Naive thymus-derived CD4-positive, alpha-beta T cell (primary cell): ENCODE measurements at regions of chr6 and their contacts with region 1.

Region 1: GRCh38 chr6:11381801-11382513 is 149.5 kb upstream of the NEDD9 start:
- DNase-seq: peak; percentile 43 to 88 (median 82)
- ATAC-seq: peak; percentile 95
- H3K4me3 ChIP-seq: peak overlapping the region; percentile 70
- H3K4me3 Mint-ChIP-seq: peak overlapping the region; percentile 76 to 96 (median 91)
- H3K27ac ChIP-seq: peak overlapping the region; percentile 79
- H3K27ac Mint-ChIP-seq: peak overlapping the region; percentile 79 to 94 (median 91)
- H3K4me1 ChIP-seq: peaks cover 23 to 28% of the 10 kb centered on the region in 2 donors
- H3K4me1 Mint-ChIP-seq: peaks cover 42 to 85% (median 66%) of the 10 kb centered on the region in 7 donors
- H3K27me3 ChIP-seq: no peaks in the 10 kb centered on the region
- H3K27me3 Mint-ChIP-seq: no peaks in the 10 kb centered on the region

Region 2: DNA sequence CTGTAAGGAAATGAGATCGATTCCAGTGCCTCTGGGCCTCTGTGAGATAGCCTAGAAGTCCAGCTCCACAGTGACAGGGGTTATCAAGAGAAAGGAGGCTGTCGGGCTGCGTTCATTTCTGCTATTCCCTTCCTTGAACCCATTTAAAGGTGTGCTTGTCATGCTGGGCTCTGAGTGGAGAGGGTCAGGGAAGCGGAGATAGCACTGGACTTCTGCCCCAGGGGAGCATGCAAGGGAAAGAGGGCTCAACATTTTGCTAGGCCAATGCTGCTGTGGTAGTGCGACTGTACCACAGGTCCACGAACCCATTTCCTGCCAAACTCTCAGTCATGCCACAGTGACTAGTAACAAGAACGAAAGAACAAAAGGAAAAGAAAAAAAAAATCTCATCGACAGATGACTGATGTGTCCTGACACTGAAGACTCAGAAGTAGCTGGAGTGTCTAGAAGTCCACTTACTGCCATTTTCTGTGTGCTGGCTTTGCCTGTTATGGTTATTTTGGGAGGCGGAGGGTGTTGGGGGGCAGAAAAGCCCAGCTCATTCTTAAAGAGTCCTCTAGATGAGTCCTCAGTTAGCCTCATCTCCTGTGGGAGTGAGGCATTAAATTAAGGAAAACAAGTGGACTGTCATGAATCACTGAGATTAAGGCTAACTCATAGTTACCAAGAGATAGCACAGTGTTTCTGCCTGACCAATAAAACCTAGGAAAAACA is 157.5 kb before region 1 on chr6:
- CTCF ChIA-PET with region 1: no interaction called
- POLR2A ChIA-PET with region 1: no interaction called
- intact Hi-C with region 1: loop called in 1 of 2 experiments (anchors 2 kb)
- DNase-seq: peak in 6 of 9 donors; percentile 4 to 51 (median 34)
- ATAC-seq: peak; percentile 75
- H3K4me3 ChIP-seq: peak overlapping the region; percentile 20
- H3K4me3 Mint-ChIP-seq: peak overlapping the region; percentile 26 to 87 (median 62)
- H3K27ac ChIP-seq: no peak overlapping the region
- H3K27ac Mint-ChIP-seq: peak overlapping the region in 7 of 9 donors; percentile 15 to 93 (median 56)
- H3K4me1 ChIP-seq: peaks cover 8 to 37% of the 10 kb centered on the region in 2 donors
- H3K4me1 Mint-ChIP-seq: peaks cover 27 to 84% (median 38%) of the 10 kb centered on the region in 7 donors
- H3K27me3 ChIP-seq: no peaks in the 10 kb centered on the region
- H3K27me3 Mint-ChIP-seq: no peaks in the 10 kb centered on the region

Region 3: DNA sequence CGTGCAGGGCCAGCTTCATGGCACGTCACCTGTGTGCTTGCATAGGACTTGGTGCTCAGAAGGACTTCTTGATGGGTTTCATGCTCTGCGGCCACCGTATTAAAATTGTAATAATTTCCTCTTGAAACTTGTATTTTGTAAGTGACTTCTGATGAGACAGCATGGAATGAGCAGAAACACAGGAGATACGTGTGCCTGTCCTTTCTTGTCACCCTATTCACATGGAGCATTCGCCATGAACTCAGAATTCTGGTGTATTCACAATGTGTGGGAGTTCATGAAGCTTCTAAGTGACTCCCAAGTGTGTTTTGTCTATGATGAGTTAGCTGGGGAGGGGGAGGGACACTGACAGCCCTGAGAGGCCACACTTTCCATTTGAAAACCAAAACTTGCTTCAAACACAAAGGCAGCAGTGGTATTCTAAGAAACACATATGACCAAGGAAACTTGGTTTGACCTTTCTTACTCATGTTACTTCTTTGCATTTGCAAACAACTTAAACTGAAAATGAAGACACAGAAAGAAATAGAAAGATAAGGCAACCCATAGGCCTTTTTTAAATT is 57.4 kb before region 1 on chr6:
- CTCF ChIA-PET with region 1: no interaction called
- POLR2A ChIA-PET with region 1: no interaction called
- intact Hi-C with region 1: loop called in 1 of 2 experiments (anchors 2 kb)
- DNase-seq: peak in 1 of 9 donors; percentile 46
- ATAC-seq: no peak
- H3K4me3 ChIP-seq: no peak overlapping the region
- H3K4me3 Mint-ChIP-seq: peak overlapping the region in 1 of 10 donors; percentile 63
- H3K27ac ChIP-seq: no peak overlapping the region
- H3K27ac Mint-ChIP-seq: peak overlapping the region in 4 of 9 donors; percentile 14 to 88 (median 36)
- H3K4me1 ChIP-seq: no peaks in the 10 kb centered on the region
- H3K4me1 Mint-ChIP-seq: peaks cover 29 to 77% (median 43%) of the 10 kb centered on the region in 7 donors
- H3K27me3 ChIP-seq: no peaks in the 10 kb centered on the region
- H3K27me3 Mint-ChIP-seq: no peaks in the 10 kb centered on the region

Region 4: DNA sequence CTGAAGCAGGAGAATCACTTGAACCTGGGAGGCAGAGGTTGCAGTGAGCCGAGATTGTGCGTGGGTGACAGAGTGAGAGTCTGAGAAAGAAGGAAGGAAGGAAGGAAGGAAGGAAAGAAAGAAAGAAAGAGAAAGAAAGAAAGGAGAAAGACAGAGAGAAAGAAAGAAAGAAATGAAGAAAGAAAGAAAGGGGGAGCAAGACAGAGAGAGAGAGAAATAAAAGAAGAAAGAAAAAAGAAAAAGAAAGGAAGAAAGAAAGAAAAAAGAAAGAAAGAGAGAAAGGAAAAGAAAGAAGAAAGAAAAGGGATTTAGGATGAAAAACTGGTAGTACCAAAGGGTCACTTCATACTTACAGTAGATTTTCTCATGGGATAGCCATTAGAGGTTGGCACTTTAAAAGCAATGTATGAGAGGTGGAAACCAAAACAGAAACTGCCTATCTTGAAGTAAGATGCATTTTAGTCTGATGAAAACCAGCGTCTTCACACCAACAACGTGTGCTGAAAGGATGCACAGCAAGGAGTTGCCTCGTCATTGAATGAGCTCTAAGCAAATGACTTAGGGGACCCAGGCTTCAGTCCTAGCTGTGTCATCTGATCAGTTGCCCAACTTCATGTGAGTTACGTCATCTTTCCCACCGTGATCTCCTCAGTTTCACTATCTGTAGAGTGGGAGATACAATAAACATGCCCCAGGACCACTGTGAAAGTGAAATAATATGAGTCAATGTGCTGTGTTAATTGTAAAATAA is 15.6 kb before region 1 on chr6:
- CTCF ChIA-PET with region 1: no interaction called
- POLR2A ChIA-PET with region 1: interaction called, 7 read pairs
- intact Hi-C with region 1: loop called in 1 of 2 experiments (anchors 1 kb)
- DNase-seq: peak in 1 of 9 donors; percentile 46
- ATAC-seq: peak; percentile 89
- H3K4me3 ChIP-seq: no peak overlapping the region
- H3K4me3 Mint-ChIP-seq: peak overlapping the region in 8 of 10 donors; percentile 9 to 73 (median 45)
- H3K27ac ChIP-seq: no peak overlapping the region
- H3K27ac Mint-ChIP-seq: peak overlapping the region in 7 of 9 donors; percentile 38 to 90 (median 56)
- H3K4me1 ChIP-seq: peaks cover 0 to 22% of the 10 kb centered on the region in 2 donors
- H3K4me1 Mint-ChIP-seq: peaks cover 50 to 87% (median 77%) of the 10 kb centered on the region in 7 donors
- H3K27me3 ChIP-seq: no peaks in the 10 kb centered on the region
- H3K27me3 Mint-ChIP-seq: no peaks in the 10 kb centered on the region

Region 5: GRCh38 chr6:11537229-11538051 is 155.5 kb after region 1 on chr6 and contains the start of gene TMEM170B:
- CTCF ChIA-PET with region 1: no interaction called
- POLR2A ChIA-PET with region 1: no interaction called
- intact Hi-C with region 1: loop called in 1 of 2 experiments (anchors 1 kb)
- DNase-seq: peak; percentile 94 to 99 (median 98)
- ATAC-seq: peak; percentile 95
- H3K4me3 ChIP-seq: peak within 1 kb of the TSS; percentile 62
- H3K4me3 Mint-ChIP-seq: peak within 1 kb of the TSS; percentile 82 to 90 (median 88)
- H3K27ac ChIP-seq: peak within 1 kb of the TSS; percentile 76
- H3K27ac Mint-ChIP-seq: peak within 1 kb of the TSS in 8 of 9 donors; percentile 67 to 93 (median 83)
- H3K4me1 ChIP-seq: peaks cover 4 to 5% of the 10 kb centered on the region in 2 donors
- H3K4me1 Mint-ChIP-seq: peaks cover 6 to 28% (median 19%) of the 10 kb centered on the region in 7 donors
- H3K27me3 ChIP-seq: no peaks in the 10 kb centered on the region
- H3K27me3 Mint-ChIP-seq: peaks cover 0 to 76% (median 7%) of the 10 kb centered on the region in 5 donors
- total RNA-seq, gene TMEM170B: 0.29 to 12.7 (median 3.4) TPM